Motor neuron (in vitro differentiated cells): ENCODE measurements at regions of chr12 and their contacts with region 1.

Region 1: DNA sequence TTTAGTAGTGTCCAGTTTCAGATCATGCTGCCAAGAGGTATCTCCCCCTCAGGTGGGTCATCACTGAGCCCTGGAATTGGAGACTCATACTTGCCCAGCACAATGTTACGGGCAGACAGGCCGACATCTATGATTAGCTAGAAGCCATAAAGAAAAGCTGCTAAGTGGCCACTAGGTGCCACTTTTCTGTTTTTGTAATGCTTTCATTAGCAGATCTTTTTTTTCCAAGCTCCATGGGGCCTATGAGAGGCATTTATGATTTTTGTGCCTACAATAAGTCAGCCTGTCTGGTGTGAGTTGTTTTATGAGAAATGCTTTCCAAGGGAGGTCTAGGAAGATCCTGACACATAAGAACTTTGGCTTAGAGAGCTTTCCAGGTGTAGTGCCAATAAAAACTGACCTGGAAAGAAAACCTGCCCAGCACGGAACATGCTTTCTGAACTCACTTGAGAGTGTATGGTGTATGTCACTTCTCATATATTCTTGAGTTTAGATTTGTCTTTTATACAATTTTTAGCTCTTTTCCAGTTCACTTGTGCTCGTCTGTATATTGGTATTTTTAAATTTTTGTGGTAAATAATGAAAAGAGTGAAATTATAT is 21.8 kb upstream of the SMCO2 start:
- ATAC-seq: peak in 5 of 8 experiments; percentile 54 to 86 (median 67)
- H3K4me3 ChIP-seq: no peak overlapping the region
- H3K27ac ChIP-seq: no peak overlapping the region
- H3K4me1 ChIP-seq: no peaks in the 10 kb centered on the region

Region 2: GRCh38 chr12:27635349-27635972 is 210.7 kb after region 1 on chr12:
- in situ Hi-C with region 1: loop called in 3 of 9 experiments (anchors 25 kb)
- ATAC-seq: peak in 3 of 8 experiments; percentile 33 to 37 (median 37)
- H3K4me3 ChIP-seq: no peak overlapping the region
- H3K27ac ChIP-seq: no peak overlapping the region
- H3K4me1 ChIP-seq: no peaks in the 10 kb centered on the region

Region 3: DNA sequence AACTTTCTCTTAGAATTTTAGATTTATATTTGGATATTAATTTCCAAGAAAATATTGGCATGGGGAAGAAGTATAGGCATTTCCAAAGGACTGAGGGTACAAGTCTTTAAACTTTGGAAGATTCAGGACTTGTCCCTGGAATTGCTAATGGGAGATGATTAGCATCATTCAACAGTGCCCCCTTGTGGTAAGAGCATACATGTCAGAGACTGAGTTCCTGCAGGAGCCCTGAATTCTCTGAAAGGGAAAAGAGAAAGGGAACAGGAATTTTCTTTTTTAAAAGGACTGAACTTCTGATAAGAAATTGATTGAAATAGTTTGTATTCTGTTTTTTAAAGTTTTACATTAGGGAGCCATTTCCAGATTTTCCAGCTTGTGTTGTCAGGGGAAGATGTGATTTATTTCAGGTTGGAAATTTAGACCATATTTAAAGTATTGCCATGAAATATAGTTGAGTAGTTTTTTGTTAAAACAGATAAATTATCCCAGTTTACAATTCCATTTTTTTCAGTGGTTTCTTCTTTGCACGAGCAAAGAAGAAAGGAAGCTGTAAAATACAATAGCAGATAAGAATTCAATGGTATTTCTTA is 227.5 kb after region 1 on chr12:
- in situ Hi-C with region 1: loop called in 5 of 9 experiments (anchors 25 kb)
- ATAC-seq: peak in 7 of 8 experiments; percentile 43 to 87 (median 70)
- H3K4me3 ChIP-seq: no peak overlapping the region
- H3K27ac ChIP-seq: no peak overlapping the region
- H3K4me1 ChIP-seq: no peaks in the 10 kb centered on the region